Colonic mucosa (tissue), 4 donors: ENCODE measurements at regions of chr9 and their contacts with region 1.

Region 1: GRCh38 chr9:14179449-14179848 is 134.5 kb downstream of the NFIB start:
- DNase-seq: peak; percentile 56
- H3K4me3 ChIP-seq: no peak overlapping the region
- H3K27ac ChIP-seq: peak overlapping the region; percentile 71
- H3K4me1 ChIP-seq: no peaks in the 10 kb centered on the region
- H3K27me3 ChIP-seq: no peaks in the 10 kb centered on the region
- CTCF ChIP-seq: no peak

Region 2: GRCh38 chr9:14027116-14027800 is 152.2 kb before region 1 on chr9:
- intact Hi-C with region 1: loop called (anchors 5 kb)
- DNase-seq: peak; percentile 22
- H3K4me3 ChIP-seq: no peak overlapping the region
- H3K27ac ChIP-seq: no peak overlapping the region
- H3K4me1 ChIP-seq: no peaks in the 10 kb centered on the region
- H3K27me3 ChIP-seq: no peaks in the 10 kb centered on the region
- CTCF ChIP-seq: no peak

Region 3: GRCh38 chr9:14043481-14043880 is 136.0 kb before region 1 on chr9:
- intact Hi-C with region 1: no loop called
- DNase-seq: no peak
- H3K4me3 ChIP-seq: no peak overlapping the region
- H3K27ac ChIP-seq: no peak overlapping the region
- H3K4me1 ChIP-seq: no peaks in the 10 kb centered on the region
- H3K27me3 ChIP-seq: no peaks in the 10 kb centered on the region
- CTCF ChIP-seq: no peak

Region 4: DNA sequence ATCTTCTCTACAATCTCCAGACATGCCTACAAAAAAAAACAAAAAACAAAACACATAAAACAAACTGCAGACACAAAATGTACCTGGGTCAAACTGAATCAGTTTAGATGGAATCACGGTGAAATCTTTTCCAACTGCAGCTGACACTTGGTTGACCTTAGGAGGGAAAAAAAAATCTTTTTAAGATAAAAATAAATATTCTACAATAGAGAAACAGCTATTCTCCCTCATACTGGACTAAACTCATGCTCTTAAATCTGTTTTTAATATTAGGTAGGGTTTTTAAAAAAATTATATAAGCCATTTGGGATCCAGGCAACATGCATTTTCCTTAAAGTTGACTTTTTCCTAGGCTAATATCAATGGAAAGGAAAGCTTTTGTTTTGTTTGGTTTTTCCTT is 576.8 kb after region 1 on chr9:
- intact Hi-C with region 1: no loop called
- DNase-seq: no peak
- H3K4me3 ChIP-seq: no peak overlapping the region
- H3K27ac ChIP-seq: no peak overlapping the region
- H3K4me1 ChIP-seq: no peaks in the 10 kb centered on the region
- H3K27me3 ChIP-seq: no peaks in the 10 kb centered on the region
- CTCF ChIP-seq: no peak